MCF 10A (cell line): ENCODE measurements at regions of chr13 and their contacts with region 1.

Region 1: GRCh38 chr13:25214491-25215252 is 42.6 kb upstream of the AMER2 start:
- DNase-seq: peak; percentile 27
- H3K4me3 Mint-ChIP-seq: no peak overlapping the region
- H3K27ac Mint-ChIP-seq: no peak overlapping the region
- H3K4me1 Mint-ChIP-seq: no peaks in the 10 kb centered on the region
- H3K27me3 Mint-ChIP-seq: no peaks in the 10 kb centered on the region
- CTCF ChIP-seq: no peak

Region 2: GRCh38 chr13:25067054-25067453 is 147.6 kb before region 1 on chr13:
- CTCF ChIA-PET with region 1: no interaction called
- POLR2A ChIA-PET with region 1: no interaction called
- intact Hi-C with region 1: no loop called
- DNase-seq: no peak
- H3K4me3 Mint-ChIP-seq: no peak overlapping the region
- H3K27ac Mint-ChIP-seq: no peak overlapping the region
- H3K4me1 Mint-ChIP-seq: no peaks in the 10 kb centered on the region
- H3K27me3 Mint-ChIP-seq: peaks cover 40% of the 10 kb centered on the region
- CTCF ChIP-seq: no peak

Region 3: GRCh38 chr13:25232937-25233515 is 18.4 kb after region 1 on chr13:
- CTCF ChIA-PET with region 1: interaction called, 11 read pairs
- POLR2A ChIA-PET with region 1: no interaction called
- intact Hi-C with region 1: no loop called
- DNase-seq: peak; percentile 45
- H3K4me3 Mint-ChIP-seq: no peak overlapping the region
- H3K27ac Mint-ChIP-seq: no peak overlapping the region
- H3K4me1 Mint-ChIP-seq: no peaks in the 10 kb centered on the region
- H3K27me3 Mint-ChIP-seq: peaks cover 16% of the 10 kb centered on the region
- CTCF ChIP-seq: peak; percentile 32